H1 (cell line): ENCODE measurements at regions of chr1 and their contacts with region 1.

Region 1: DNA sequence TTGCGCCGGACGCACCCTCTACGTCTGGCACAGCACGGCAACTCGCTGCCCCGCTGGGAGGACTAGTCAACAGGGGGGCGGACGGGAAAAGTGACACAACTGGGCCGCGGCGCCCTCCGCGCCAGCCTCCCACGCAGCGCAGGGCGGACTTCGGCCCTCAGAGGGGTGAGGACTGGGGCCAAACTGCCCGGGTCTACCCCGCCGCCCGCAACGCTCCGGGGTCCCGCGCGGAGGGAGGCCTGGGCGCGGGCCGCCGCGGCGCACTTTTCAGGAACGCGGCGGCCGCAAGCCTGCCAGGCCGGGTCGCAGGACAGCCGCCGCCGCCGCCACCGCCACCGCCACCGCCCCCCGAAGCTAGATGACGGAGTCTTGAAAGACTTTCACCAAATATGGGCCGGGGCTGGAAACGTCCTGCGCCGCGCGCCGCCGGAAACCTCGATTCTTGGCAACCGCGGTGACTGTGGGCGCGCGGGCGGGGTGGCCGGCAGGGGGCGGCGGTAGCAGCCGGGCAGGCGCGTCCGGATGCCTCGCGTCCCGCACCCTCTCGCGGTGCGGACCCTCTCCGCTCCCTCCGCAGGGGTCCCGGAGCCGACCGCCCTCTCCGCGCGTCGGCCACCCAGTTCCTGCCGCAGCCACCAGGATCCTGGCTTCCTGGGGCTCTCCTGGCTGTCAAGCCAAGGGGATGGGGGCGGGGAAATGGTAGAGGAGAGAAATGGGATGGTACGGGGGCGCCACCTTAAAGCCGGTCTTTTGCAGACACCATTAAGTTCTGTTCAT is 3.7 kb upstream of the CCN1 start:
- DNase-seq: peak in 1 of 2 experiments; percentile 91
- H3K4me3 ChIP-seq: peak overlapping the region; percentile 52 to 84 (median 80)
- H3K27ac ChIP-seq: no peak overlapping the region
- H3K4me1 ChIP-seq: peaks cover 0 to 26% (median 7%) of the 10 kb centered on the region in 4 experiments; a peak in 6 of 7 replicates
- H3K27me3 ChIP-seq: peaks cover 5 to 31% (median 23%) of the 10 kb centered on the region in 4 experiments; a peak in 6 of 7 replicates
- CTCF ChIP-seq: peak; percentile 56 to 72 (median 69)
- EP300 ChIP-seq: peak in 1 of 2 experiments; percentile 67; a peak in 1 of 3 replicates
- POLR2A ChIP-seq: no peak; a peak in 2 of 3 replicates
- RAD21 ChIP-seq: peak; percentile 35 to 63; a peak in 3 of 4 replicates

Region 2: DNA sequence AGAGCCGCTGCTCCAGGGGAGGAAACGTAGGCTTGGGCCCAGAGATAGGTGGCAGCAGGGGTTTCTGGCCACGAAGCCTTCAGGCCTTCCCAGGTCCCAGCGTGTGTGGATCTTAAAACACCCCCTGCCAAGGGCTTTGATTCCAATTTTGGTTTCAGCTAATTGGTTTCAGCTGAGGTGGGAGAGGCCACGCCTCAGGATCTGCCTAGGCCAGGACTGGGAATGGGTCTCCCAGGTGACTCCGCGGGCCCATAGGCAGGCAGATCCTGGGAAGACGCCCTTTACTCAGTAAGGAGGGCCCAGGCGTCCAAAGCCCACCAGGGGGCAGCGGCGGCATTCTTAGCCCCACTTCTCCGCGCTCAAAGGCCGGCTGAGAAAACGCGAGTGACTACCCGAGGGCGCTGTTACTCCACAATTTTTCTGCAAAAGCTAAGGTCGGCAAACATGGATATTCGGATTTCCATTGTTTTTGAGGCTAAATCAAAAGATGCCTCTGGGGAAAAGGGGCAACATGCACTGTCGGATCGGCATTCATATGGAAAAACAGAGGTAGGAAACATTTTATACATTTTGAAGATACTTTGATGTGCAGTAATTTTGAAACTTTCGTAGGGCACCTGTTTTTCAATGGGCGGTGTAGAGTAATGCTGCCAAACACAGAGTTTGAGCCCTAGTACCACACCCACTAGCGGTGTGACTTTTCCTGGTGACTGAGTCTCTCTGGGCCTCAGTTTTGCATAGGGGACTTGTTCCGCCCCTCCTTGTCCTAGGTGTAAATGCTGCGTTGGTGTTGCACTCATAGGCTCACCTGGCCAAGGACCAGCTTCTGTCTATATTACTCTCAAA is 268.6 kb before region 1 on chr1:
- CTCF ChIA-PET with region 1: interaction called, 6 read pairs
- POLR2A ChIA-PET with region 1: interaction called, 19 read pairs
- DNase-seq: peak; percentile 82 to 95
- H3K4me3 ChIP-seq: no peak overlapping the region; a peak in 2 of 8 replicates
- H3K27ac ChIP-seq: no peak overlapping the region
- H3K4me1 ChIP-seq: peaks cover 2 to 6% (median 3%) of the 10 kb centered on the region in 4 experiments; a peak in 4 of 7 replicates
- H3K27me3 ChIP-seq: no peaks in the 10 kb centered on the region
- CTCF ChIP-seq: peak; percentile 85 to 99 (median 98)
- EP300 ChIP-seq: no peak
- POLR2A ChIP-seq: no peak
- RAD21 ChIP-seq: peak; percentile 99

Region 3: DNA sequence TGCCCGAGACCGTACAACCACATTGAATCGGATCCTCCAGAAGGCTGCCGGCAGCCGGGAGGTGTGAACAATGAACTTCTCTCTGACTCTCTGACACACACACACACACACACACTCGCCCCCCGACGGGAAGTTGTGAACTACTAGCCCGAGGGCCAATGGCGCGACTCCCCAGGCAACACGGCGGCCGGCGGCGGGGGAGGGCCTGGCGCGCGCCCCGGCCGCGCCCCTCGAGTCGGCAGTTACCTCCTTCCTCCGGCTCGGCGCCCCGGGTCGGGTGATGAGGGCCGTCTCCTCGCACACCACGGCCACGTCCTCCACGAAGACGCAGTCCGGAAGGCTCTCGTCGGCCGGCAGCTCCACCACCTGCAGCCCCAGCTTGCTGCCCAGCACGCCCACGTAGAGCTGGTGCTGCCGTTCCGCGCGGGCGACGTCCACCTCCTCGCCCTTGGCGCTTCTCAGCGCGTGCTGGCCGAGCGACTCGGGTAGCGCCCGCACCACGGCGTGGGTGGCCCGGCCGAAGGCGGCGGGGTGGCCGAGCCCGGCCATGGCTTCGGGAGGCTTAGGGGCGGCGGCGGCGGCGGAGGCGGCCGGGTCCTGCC is 112.2 kb before region 1 on chr1:
- CTCF ChIA-PET with region 1: interaction called, 4 read pairs
- POLR2A ChIA-PET with region 1: interaction called, 14 read pairs
- DNase-seq: peak; percentile 34 to 83
- H3K4me3 ChIP-seq: peak overlapping the region; percentile 62 to 87 (median 62)
- H3K27ac ChIP-seq: no peak overlapping the region
- H3K4me1 ChIP-seq: peaks cover 0 to 10% (median 3%) of the 10 kb centered on the region in 4 experiments; a peak in 6 of 7 replicates
- H3K27me3 ChIP-seq: peaks cover 0 to 23% (median 16%) of the 10 kb centered on the region in 4 experiments; a peak in 6 of 7 replicates
- CTCF ChIP-seq: no peak
- EP300 ChIP-seq: no peak
- POLR2A ChIP-seq: no peak; a peak in 1 of 3 replicates
- RAD21 ChIP-seq: no peak

Region 4: GRCh38 chr1:85607126-85607912 is 30.5 kb after region 1 on chr1:
- CTCF ChIA-PET with region 1: interaction called, 8 read pairs
- POLR2A ChIA-PET with region 1: interaction called, 311 read pairs
- DNase-seq: peak; percentile 77 to 93
- H3K4me3 ChIP-seq: peak overlapping the region in 1 of 4 experiments; percentile 21; a peak in 2 of 8 replicates
- H3K27ac ChIP-seq: peak overlapping the region; percentile 70; the same call in 1 of the 2 replicates
- H3K4me1 ChIP-seq: peaks cover 9 to 19% (median 14%) of the 10 kb centered on the region in 4 experiments
- H3K27me3 ChIP-seq: no peaks in the 10 kb centered on the region; a peak in 1 of 7 replicates
- CTCF ChIP-seq: no peak
- EP300 ChIP-seq: peak in 1 of 2 experiments; percentile 95; a peak in 1 of 3 replicates
- POLR2A ChIP-seq: peak in 1 of 2 experiments; percentile 66; a peak in 2 of 3 replicates
- RAD21 ChIP-seq: peak; percentile 9 to 15; a peak in 2 of 4 replicates

Region 5: GRCh38 chr1:85628791-85629531 is 52.1 kb after region 1 on chr1:
- CTCF ChIA-PET with region 1: interaction called, 4 read pairs
- POLR2A ChIA-PET with region 1: interaction called, 15 read pairs
- DNase-seq: no peak
- H3K4me3 ChIP-seq: no peak overlapping the region
- H3K27ac ChIP-seq: no peak overlapping the region
- H3K4me1 ChIP-seq: peaks cover 3 to 11% (median 6%) of the 10 kb centered on the region in 4 experiments; a peak in 6 of 7 replicates
- H3K27me3 ChIP-seq: no peaks in the 10 kb centered on the region
- CTCF ChIP-seq: no peak
- EP300 ChIP-seq: no peak
- POLR2A ChIP-seq: no peak
- RAD21 ChIP-seq: no peak

Region 6: GRCh38 chr1:85692730-85693314 is 116.0 kb after region 1 on chr1:
- CTCF ChIA-PET with region 1: interaction called, 10 read pairs
- POLR2A ChIA-PET with region 1: interaction called, 13 read pairs
- DNase-seq: no peak
- H3K4me3 ChIP-seq: no peak overlapping the region
- H3K27ac ChIP-seq: no peak overlapping the region
- H3K4me1 ChIP-seq: no peaks in the 10 kb centered on the region
- H3K27me3 ChIP-seq: no peaks in the 10 kb centered on the region
- CTCF ChIP-seq: peak in 2 of 3 experiments; percentile 6 to 22; a peak in 2 of 4 replicates
- EP300 ChIP-seq: no peak
- POLR2A ChIP-seq: no peak
- RAD21 ChIP-seq: peak in 1 of 2 experiments; percentile 45; a peak in 3 of 4 replicates